ENCODE measurements at regions of chr16 and their contacts with region 1.

Region 1: DNA sequence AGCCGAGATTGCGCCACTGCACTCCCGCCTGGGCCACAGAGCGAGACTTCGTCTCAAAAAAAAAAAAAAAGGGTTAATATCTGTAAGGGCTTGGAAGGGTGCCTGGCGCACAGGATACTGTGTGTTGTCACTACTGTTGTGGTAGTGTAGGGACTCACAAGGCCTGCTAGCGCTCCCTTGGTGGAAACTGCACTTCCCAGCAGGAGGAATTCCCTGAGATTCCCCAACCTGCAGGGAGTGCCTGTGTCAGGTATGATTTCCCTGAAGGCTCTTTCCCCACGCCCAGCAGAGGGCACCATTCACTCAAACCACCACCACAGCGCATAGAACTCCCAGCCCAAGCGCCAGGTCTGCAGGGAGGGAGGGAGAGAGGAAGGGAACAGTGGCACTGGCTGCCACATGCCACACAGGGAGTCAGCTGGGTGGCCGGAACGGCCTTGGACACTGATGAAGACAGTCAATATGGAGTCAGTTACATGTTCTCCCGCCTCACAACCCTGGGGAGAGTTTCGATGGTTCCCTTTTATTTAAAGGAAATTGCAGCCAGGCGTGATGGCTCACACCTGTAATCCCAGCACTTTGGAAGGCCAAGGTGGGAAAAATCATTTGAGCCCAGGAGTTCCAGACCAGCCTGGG is 32.7 kb upstream of the CDH1 start:
- DNase-seq: peak; percentile 42
- H3K4me3 Mint-ChIP-seq: no peak overlapping the region
- H3K27ac Mint-ChIP-seq: no peak overlapping the region
- H3K4me1 Mint-ChIP-seq: peaks cover 5% of the 10 kb centered on the region
- H3K27me3 Mint-ChIP-seq: no peaks in the 10 kb centered on the region

Region 2: GRCh38 chr16:68732036-68732680 is 27.8 kb after region 1 on chr16:
- intact Hi-C with region 1: no loop called
- DNase-seq: no peak
- H3K4me3 Mint-ChIP-seq: no peak overlapping the region
- H3K27ac Mint-ChIP-seq: no peak overlapping the region
- H3K4me1 Mint-ChIP-seq: no peaks in the 10 kb centered on the region
- H3K27me3 Mint-ChIP-seq: peaks cover 39% of the 10 kb centered on the region

Region 3: GRCh38 chr16:68752602-68753001 is 48.3 kb after region 1 on chr16:
- intact Hi-C with region 1: loop called (anchors 2 kb)
- DNase-seq: peak; percentile 20
- H3K4me3 Mint-ChIP-seq: peak overlapping the region; percentile 52
- H3K27ac Mint-ChIP-seq: peak overlapping the region; percentile 86
- H3K4me1 Mint-ChIP-seq: peaks cover 42% of the 10 kb centered on the region
- H3K27me3 Mint-ChIP-seq: peaks cover 2% of the 10 kb centered on the region

Region 4: GRCh38 chr16:68800257-68800875 is 96.0 kb after region 1 on chr16:
- intact Hi-C with region 1: loop called (anchors 1 kb)
- DNase-seq: peak; percentile 48
- H3K4me3 Mint-ChIP-seq: no peak overlapping the region
- H3K27ac Mint-ChIP-seq: no peak overlapping the region
- H3K4me1 Mint-ChIP-seq: peaks cover 4% of the 10 kb centered on the region
- H3K27me3 Mint-ChIP-seq: peaks cover 2% of the 10 kb centered on the region

Region 5: GRCh38 chr16:69123910-69124309 is 419.6 kb after region 1 on chr16:
- intact Hi-C with region 1: loop called (anchors 5 kb)
- DNase-seq: peak; percentile 50
- H3K4me3 Mint-ChIP-seq: no peak overlapping the region
- H3K27ac Mint-ChIP-seq: no peak overlapping the region
- H3K4me1 Mint-ChIP-seq: peaks cover 9% of the 10 kb centered on the region
- H3K27me3 Mint-ChIP-seq: no peaks in the 10 kb centered on the region

Measured in activated T-helper 1 cell treated with anti-CD3 and anti-CD28 coated beads, Interleukin-12 subunit alpha, Interleukin-12 subunit beta, Interleukin-2, Interleukin-4 antibody, amounts not matched to agents 30 ng/mL and 10 ng/mL and 1 ng/mL, durations not matched to agents 14 hours and 24 hours and 36 hours (primary cell).